Activated CD4-positive, alpha-beta T cell treated with anti-CD3 and anti-CD28 coated beads, Interleukin-2, amount 10 ng/mL, durations not matched to agents 24 days and 14 days (primary cell): ENCODE measurements at regions of chr6 and their contacts with region 1.

Region 1: DNA sequence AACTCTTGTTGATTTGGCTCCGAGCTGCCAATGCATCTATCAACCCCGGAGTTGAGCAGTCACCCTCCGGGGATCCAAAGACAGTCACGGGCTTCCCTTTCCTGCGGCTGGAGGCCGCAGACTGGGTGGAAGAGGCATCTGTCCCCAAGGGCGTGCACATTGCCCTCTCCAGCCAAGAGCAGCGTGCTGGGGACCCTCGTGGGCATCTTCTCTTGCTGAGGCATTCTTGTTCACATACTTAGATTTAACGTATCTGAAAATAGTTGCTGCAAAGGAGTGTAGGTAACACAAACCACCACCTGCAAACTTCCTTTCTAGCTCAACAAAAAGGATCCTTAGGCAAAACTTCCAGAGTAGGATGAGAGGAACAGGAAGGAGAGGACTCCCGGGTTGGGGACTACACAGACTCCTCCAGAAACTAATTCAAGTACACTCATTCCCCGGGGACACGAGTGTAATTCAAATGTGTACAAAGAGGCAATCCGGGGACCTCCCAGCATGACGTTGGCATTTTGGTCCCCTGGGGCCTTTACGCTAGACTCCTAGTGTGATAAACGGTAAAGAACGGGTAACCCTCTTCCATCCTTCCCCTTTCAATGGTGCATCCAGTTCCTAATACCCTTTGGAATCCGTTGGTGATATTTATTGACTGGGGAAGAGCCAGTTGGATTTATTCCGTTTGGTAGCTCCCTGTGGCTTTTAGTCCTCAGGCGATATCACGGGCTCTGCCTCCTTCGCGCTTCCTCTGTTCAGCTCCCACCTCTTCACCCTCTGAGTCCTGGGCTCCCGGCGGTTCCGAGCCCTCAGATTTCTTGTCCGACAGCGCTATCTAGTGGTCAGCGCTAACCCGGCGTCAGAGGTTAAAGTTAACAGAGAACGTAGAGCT is 2.7 kb upstream of the COL12A1 start:
- DNase-seq: peak; percentile 95
- H3K4me3 Mint-ChIP-seq: peak overlapping the region; percentile 83
- H3K27ac Mint-ChIP-seq: peak overlapping the region; percentile 66
- H3K4me1 Mint-ChIP-seq: peaks cover 51% of the 10 kb centered on the region
- H3K27me3 Mint-ChIP-seq: peaks cover 70% of the 10 kb centered on the region

Region 2: DNA sequence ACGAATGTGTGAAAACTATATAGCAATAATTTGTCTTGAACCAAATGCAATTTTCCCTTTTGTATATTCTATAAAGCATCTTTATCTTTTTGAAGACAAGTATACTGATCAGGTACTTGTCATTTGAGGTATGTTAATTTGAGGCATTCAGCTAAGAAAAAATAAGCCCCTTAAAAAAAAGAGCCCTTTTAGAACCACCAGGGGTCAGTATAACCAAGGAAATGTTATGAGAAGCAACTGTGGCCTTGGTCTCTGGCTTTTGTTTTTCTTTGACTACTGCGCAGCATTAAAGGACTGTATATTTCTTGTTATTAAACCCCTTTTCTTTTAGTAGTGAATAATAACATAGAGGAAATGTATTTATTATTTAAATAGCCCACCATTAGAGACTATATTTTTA is 1469.4 kb before region 1 on chr6:
- intact Hi-C with region 1: loop called (anchors 1 kb)
- DNase-seq: peak; percentile 73
- H3K4me3 Mint-ChIP-seq: no peak overlapping the region
- H3K27ac Mint-ChIP-seq: no peak overlapping the region
- H3K4me1 Mint-ChIP-seq: peaks cover 5% of the 10 kb centered on the region
- H3K27me3 Mint-ChIP-seq: no peaks in the 10 kb centered on the region

Region 3: GRCh38 chr6:73969971-73970970 is 1238.3 kb before region 1 on chr6:
- intact Hi-C with region 1: loop called (anchors 1 kb)
- DNase-seq: no peak
- H3K4me3 Mint-ChIP-seq: no peak overlapping the region
- H3K27ac Mint-ChIP-seq: no peak overlapping the region
- H3K4me1 Mint-ChIP-seq: no peaks in the 10 kb centered on the region
- H3K27me3 Mint-ChIP-seq: no peaks in the 10 kb centered on the region

Region 4: GRCh38 chr6:74343804-74344203 is 864.7 kb before region 1 on chr6:
- intact Hi-C with region 1: loop called (anchors 10 kb)
- DNase-seq: no peak
- H3K4me3 Mint-ChIP-seq: no peak overlapping the region
- H3K27ac Mint-ChIP-seq: no peak overlapping the region
- H3K4me1 Mint-ChIP-seq: no peaks in the 10 kb centered on the region
- H3K27me3 Mint-ChIP-seq: no peaks in the 10 kb centered on the region

Region 5: DNA sequence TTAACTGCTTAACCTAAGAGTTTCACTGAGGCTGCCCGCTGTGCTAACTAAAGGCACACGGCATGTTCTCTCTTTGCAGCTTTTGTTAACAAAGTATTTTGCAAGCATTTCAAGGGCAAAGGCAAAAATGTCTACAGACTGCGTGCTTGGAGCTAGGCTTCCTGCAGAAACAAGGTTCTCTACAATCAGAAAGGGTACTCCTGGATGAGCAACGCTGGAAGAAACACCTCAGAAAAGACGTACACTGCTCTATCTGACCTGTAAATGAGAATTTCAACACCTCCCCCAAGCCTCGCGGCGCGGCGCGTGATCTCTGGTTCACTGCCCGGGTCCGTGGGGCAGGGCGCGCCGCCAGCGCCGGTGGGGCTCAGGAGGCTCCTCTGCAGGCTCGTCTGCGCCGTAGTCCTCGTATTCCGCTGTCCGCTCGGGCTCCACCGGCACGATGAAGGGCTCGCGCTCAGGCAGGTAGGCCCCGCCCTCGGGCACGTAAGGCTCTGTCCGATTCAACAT is 123.6 kb before region 1 on chr6:
- intact Hi-C with region 1: loop called (anchors 5 kb)
- DNase-seq: no peak
- H3K4me3 Mint-ChIP-seq: no peak overlapping the region
- H3K27ac Mint-ChIP-seq: no peak overlapping the region
- H3K4me1 Mint-ChIP-seq: peaks cover 2% of the 10 kb centered on the region
- H3K27me3 Mint-ChIP-seq: peaks cover 23% of the 10 kb centered on the region